GM10248 (cell line): ENCODE measurements at regions of chr17 and their contacts with region 1.

Region 1: DNA sequence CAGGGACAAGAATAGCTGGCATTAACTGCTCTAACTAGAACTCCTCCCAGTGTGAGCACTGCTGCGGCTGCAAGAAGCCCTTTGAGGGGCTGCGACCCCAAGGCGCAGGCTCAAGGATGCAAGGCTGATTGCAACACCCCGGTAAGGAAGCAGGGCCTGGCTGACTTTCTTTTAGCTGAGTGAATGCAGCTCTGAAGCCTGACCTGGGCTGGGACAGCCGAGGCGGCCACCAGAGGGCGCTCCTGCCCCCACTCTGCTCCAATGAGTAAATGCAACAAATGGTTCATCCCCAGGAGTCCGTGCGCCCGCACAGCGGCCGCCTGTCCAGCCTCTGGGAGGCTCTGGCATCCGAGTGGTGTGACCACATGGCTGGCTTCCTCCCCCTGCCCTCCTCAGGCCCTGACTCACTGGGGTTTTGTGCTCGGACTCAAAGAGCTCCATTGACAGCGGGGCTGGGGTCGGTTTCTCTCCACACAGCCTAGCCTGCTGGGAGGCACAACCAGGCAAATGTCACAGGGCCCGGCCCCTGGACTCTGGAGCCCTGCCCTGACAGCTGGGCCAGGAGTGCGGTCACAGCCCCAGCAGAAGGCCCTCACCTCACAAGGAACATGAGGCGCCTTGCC is at the start of gene SMIM5:
- DNase-seq: peak; percentile 93
- CTCF ChIP-seq: peak; percentile 93

Region 2: GRCh38 chr17:75364078-75364477 is 268.9 kb before region 1 on chr17:
- CTCF ChIA-PET with region 1: no interaction called
- POLR2A ChIA-PET with region 1: no interaction called
- DNase-seq: no peak
- CTCF ChIP-seq: no peak

Region 3: GRCh38 chr17:75405365-75406221 is 227.4 kb before region 1 on chr17 and contains the start of gene GRB2:
- CTCF ChIA-PET with region 1: no interaction called
- POLR2A ChIA-PET with region 1: no interaction called
- DNase-seq: peak; percentile 99
- CTCF ChIP-seq: no peak

Region 4: DNA sequence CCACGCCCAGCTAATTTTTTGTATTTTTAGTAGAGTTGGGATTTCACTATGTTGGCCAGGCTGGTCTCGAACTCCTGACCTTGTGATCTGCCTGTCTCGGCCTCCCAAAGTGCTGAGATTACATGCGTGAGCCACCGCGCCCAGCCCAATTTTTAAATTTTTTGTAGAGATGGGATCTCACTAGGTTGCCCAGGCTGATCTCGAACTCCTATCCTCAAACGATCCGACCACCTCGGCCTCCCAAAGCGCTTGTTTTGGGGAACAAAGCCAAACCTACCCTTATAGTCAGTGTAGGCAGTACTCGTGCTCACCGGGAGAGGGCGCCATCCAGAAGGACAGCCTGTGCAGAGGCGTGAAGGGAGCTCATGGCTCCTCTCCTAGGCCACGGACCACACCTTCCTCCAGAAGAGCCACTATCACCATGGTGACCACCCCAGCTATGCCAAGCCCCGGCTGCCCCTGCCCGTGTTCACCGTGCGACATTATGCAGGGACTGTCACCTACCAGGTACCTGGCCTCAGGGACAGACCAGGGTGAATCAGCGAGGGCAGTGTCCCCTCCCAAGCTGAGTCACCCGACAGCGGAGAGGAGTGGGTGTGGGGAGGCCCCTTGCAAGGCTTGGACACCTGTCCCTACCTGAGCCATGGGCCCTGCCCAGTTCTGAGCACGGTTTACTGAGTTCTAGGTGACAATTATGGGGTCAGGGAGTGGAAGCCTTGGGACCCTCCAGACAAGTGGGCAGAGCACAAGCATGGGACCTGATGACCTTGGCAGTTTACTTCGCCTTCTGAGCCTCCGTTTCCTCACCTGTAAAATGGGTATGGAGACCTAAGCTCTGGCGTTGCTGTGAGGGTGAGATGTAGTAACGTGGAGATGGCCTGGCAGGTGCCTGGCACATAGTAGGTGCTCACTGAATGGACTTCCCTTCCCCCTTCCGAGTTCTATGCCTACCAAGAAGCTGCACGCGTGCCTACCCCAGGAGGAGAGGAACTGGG is 31.6 kb before region 1 on chr17:
- CTCF ChIA-PET with region 1: interaction called, 76 read pairs
- POLR2A ChIA-PET with region 1: no interaction called
- DNase-seq: peak; percentile 81
- CTCF ChIP-seq: peak; percentile 85

Region 5: DNA sequence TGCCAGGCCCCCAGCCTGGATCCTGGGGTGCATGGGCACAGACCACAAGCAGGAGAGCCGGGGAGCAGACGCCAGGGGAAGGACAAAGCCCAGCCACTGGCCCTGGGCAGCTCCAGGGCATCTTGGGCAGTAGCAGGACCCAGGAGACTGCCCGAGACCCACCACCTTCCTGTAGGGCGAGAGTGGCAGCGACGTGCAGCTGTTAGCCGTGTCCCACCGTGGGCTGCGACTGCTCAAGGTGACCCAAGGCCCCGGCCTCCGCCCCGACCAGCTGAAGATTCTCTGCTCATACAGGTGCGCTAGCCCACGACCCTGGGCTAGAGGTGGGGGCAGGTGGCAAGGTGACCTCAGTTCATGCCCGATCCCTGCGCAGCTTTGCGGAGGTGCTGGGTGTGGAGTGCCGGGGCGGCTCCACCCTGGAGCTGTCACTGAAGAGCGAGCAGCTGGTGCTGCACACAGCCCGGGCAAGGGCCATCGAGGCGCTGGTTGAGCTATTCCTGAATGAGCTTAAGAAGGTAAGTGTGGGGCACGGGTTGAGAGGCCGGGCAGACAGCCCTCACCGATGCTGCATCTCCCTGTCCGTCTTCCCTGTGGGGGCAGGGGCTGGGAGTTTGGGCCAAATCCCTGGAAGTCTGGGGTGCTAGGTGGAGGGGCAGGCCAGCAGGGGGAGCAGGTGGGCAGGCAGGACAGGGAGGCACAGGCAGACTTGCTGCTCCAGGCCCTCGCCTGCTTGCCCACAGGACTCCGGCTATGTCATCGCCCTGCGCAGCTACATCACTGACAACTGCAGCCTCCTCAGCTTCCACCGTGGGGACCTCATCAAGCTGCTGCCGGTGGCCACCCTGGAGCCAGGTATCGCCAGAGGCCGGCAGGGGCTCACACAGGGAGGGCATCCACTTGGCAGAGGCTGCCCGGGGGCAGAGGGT is 13.2 kb before region 1 on chr17:
- CTCF ChIA-PET with region 1: interaction called, 82 read pairs
- POLR2A ChIA-PET with region 1: no interaction called
- DNase-seq: peak; percentile 59
- CTCF ChIP-seq: peak; percentile 28

Region 6: GRCh38 chr17:75673487-75673886 is 40.5 kb after region 1 on chr17:
- CTCF ChIA-PET with region 1: interaction called, 29 read pairs
- POLR2A ChIA-PET with region 1: no interaction called
- DNase-seq: no peak
- CTCF ChIP-seq: no peak

Region 7: DNA sequence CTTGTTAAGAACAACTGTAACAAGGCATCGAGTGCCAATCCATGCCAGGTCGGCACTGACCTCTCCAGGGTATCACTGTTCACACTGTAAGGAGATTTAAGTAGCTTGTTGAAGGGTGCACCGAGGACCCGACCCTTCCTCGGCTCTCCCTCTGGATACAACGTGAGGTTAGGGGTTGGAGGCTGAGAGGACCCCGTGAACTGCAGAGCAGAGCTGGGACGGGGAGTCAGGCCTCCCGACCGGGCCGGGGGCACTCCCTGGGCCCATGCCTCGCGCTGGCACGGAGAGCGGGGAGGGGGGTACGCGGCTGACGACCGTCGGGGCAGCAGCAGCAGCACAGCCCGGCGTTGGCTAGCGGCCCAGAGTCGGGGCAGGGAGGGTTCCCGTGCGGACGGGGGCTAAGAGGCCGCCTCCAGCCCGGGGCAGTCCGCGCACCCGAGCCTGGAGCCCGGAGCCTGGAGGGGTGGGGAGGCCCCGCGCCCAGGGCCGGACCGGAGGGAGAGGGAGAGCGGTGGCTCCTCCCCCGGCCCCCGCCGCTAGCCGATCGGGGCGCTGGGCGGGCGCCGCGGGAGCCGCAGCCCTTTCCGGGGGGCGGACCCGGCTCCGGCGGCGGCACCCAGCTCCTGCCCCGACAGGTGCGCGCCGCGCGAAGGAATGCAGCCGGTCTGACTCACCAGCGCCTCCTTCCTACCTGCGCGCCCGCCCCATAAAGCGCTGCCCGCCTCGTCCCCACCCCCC is 87.9 kb after region 1 on chr17 and contains the start of gene ITGB4:
- CTCF ChIA-PET with region 1: interaction called, 17 read pairs
- POLR2A ChIA-PET with region 1: no interaction called
- DNase-seq: peak; percentile 83
- CTCF ChIP-seq: no peak

Region 8: DNA sequence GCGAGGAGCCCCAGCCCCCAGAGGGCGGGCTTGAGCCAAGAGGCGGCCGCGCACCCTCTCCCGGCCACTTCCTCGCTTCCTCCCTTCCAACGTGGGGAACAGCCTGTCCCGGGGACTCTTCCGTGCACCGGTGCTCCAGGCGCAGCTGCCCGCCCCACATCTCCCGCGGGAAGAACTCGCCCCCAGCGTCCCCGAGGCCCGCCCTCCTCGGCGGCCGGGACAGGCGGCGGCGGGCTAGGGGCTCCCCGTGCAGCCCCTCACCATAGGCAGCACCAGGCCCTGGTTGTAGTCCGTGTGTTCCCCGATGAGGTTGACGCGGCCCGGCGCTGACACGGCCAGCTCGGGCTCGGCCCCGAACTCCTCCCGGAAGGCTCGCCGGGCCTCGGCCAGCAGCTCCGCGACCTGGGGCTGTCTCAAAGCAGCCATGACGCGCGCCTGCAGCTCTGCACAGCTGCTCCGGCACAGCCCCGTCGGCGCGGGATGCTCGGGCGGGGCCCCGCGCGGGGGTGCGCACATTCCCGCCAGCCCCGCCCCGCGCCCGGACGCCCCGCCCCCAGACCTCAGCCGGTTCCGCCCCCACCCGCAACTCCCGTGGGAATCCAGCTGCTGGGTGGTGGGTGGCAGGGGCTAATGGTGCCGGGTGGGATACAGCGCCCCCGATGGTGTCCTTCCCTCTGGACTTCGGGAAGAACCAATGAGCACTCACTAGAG is 131.9 kb after region 1 on chr17 and contains the start of gene GALK1:
- CTCF ChIA-PET with region 1: interaction called, 22 read pairs
- POLR2A ChIA-PET with region 1: no interaction called
- DNase-seq: peak; percentile 89
- CTCF ChIP-seq: peak; percentile 88